Activated CD4-positive, alpha-beta T cell treated with anti-CD3 and anti-CD28 coated beads for 36 hours (primary cell): ENCODE measurements at regions of chr1 and their contacts with region 1.

Region 1: GRCh38 chr1:9629445-9630201 is 21.9 kb upstream of the PIK3CD start:
- DNase-seq: peak; percentile 88
- ATAC-seq: peak; percentile 45
- H3K4me3 Mint-ChIP-seq: peak overlapping the region; percentile 87
- H3K27ac Mint-ChIP-seq: peak overlapping the region; percentile 95
- H3K4me1 Mint-ChIP-seq: peaks cover 64% of the 10 kb centered on the region
- H3K27me3 Mint-ChIP-seq: peaks cover 2% of the 10 kb centered on the region

Region 2: GRCh38 chr1:9643351-9644256 is 14.0 kb after region 1 on chr1:
- CTCF ChIA-PET with region 1: interaction called, 24 read pairs
- POLR2A ChIA-PET with region 1: interaction called, 6 read pairs
- intact Hi-C with region 1: no loop called
- DNase-seq: peak; percentile 55
- ATAC-seq: peak; percentile 60
- H3K4me3 Mint-ChIP-seq: no peak overlapping the region
- H3K27ac Mint-ChIP-seq: peak overlapping the region; percentile 59
- H3K4me1 Mint-ChIP-seq: peaks cover 60% of the 10 kb centered on the region
- H3K27me3 Mint-ChIP-seq: no peaks in the 10 kb centered on the region

Region 3: DNA sequence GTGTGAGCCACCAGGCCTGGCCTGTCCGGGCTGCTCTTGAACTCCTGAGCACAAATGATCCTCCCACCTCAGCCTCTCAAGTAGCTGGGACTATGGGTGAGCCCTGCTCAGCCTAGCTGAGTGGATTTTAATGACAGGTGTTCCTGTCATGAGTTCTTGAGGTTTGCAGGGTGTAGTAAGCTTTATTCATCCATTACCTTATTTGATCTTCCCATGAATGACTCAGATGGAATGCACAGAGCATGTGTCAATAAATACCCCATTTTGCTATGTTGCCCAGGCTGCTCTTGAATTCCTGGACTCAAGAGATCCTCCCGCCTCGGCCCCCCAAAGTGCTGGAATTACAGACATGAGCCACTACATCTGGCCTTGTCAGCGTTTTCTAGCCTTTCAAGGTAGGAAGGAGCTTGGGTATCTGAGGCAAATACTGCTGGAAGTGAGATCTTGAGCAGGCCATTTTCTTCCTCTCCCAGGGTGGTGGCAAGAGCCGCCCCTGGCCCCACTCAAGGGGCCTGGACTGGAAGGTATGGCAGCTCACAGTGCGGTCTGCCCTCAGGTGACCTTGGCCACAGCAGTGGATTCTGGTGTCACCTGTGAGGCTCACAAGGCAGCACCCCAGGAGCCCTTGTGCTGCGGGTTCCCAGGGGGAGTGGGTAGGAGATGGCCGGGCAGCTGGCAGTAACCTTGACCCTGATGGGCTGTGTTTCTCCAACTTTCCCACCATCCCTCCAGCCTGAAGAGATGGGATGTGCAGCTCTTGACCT is 41.9 kb after region 1 on chr1:
- CTCF ChIA-PET with region 1: interaction called, 8 read pairs
- POLR2A ChIA-PET with region 1: interaction called, 6 read pairs
- intact Hi-C with region 1: loop called (anchors 1 to 5 kb)
- DNase-seq: peak; percentile 51
- ATAC-seq: peak; percentile 82
- H3K4me3 Mint-ChIP-seq: no peak overlapping the region
- H3K27ac Mint-ChIP-seq: peak overlapping the region; percentile 86
- H3K4me1 Mint-ChIP-seq: peaks cover 75% of the 10 kb centered on the region
- H3K27me3 Mint-ChIP-seq: no peaks in the 10 kb centered on the region

Region 4: GRCh38 chr1:9717193-9718005 is 87.8 kb after region 1 on chr1:
- CTCF ChIA-PET with region 1: interaction called, 20 read pairs
- POLR2A ChIA-PET with region 1: no interaction called
- intact Hi-C with region 1: loop called (anchors 1 to 2 kb)
- DNase-seq: peak; percentile 93
- ATAC-seq: peak; percentile 81
- H3K4me3 Mint-ChIP-seq: peak overlapping the region; percentile 76
- H3K27ac Mint-ChIP-seq: peak overlapping the region; percentile 93
- H3K4me1 Mint-ChIP-seq: peaks cover 62% of the 10 kb centered on the region
- H3K27me3 Mint-ChIP-seq: no peaks in the 10 kb centered on the region

Region 5: GRCh38 chr1:9784508-9785133 is 155.0 kb after region 1 on chr1:
- CTCF ChIA-PET with region 1: interaction called, 21 read pairs
- POLR2A ChIA-PET with region 1: no interaction called
- intact Hi-C with region 1: loop called (anchors 2 kb)
- DNase-seq: peak; percentile 83
- ATAC-seq: peak; percentile 45
- H3K4me3 Mint-ChIP-seq: no peak overlapping the region
- H3K27ac Mint-ChIP-seq: no peak overlapping the region
- H3K4me1 Mint-ChIP-seq: peaks cover 39% of the 10 kb centered on the region
- H3K27me3 Mint-ChIP-seq: no peaks in the 10 kb centered on the region

Region 6: GRCh38 chr1:9867408-9868243 is 238.0 kb after region 1 on chr1:
- CTCF ChIA-PET with region 1: interaction called, 17 read pairs
- POLR2A ChIA-PET with region 1: no interaction called
- intact Hi-C with region 1: loop called (anchors 1 kb)
- DNase-seq: peak; percentile 93
- ATAC-seq: peak; percentile 99
- H3K4me3 Mint-ChIP-seq: no peak overlapping the region
- H3K27ac Mint-ChIP-seq: no peak overlapping the region
- H3K4me1 Mint-ChIP-seq: no peaks in the 10 kb centered on the region
- H3K27me3 Mint-ChIP-seq: no peaks in the 10 kb centered on the region